Activated B cell treated with CpG ODN at 0.5 μM for 24 hours (primary cell): ENCODE measurements at regions of chr1 and their contacts with region 1.

Region 1: GRCh38 chr1:8510041-8510823 is 192.3 kb downstream of the SLC45A1 start:
- DNase-seq: no peak
- ATAC-seq: peak; percentile 65
- H3K4me3 Mint-ChIP-seq: peak overlapping the region; percentile 75
- H3K27ac Mint-ChIP-seq: peak overlapping the region; percentile 87
- H3K4me1 Mint-ChIP-seq: peaks cover 45% of the 10 kb centered on the region
- H3K27me3 Mint-ChIP-seq: no peaks in the 10 kb centered on the region
- CTCF ChIP-seq: no peak

Region 2: DNA sequence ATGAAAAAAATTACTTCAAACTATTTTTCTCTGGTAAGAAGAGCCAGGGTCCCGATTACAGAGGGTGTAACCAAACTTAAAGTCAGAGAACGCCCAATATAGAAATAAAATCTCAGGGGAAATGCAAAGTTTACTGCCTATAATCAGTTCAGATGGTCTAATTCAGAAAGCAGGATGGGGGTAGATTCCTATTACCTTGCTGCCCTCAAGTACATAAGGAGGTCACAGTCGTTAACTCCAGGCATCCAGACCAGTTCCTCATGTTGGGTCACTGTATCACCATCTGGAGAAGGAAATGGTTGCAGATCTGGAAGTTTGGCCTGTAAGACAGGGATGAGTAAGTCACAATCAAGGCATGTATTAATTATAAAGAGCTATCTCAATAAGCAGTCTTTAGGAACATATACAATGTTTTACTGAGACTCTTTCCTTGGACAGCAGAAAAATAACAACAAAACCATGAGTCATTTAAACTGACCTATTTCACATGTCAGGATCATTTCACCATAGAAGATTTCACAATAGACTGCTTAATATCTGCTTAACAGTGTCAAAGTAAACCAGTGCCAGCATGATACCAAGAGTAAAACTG is 12.9 kb before region 1 on chr1:
- CTCF ChIA-PET with region 1: no interaction called
- POLR2A ChIA-PET with region 1: interaction called, 18 read pairs
- intact Hi-C with region 1: no loop called
- DNase-seq: no peak
- ATAC-seq: peak; percentile 57
- H3K4me3 Mint-ChIP-seq: peak overlapping the region; percentile 46
- H3K27ac Mint-ChIP-seq: peak overlapping the region; percentile 93
- H3K4me1 Mint-ChIP-seq: peaks cover 63% of the 10 kb centered on the region
- H3K27me3 Mint-ChIP-seq: no peaks in the 10 kb centered on the region
- CTCF ChIP-seq: no peak